GM10248 (cell line): ENCODE measurements at regions of chr13 and their contacts with region 1.

Region 1: GRCh38 chr13:46552889-46553510 is at the start of gene LRCH1:
- DNase-seq: peak; percentile 93
- CTCF ChIP-seq: no peak

Region 2: GRCh38 chr13:46530084-46530935 is 22.7 kb before region 1 on chr13:
- CTCF ChIA-PET with region 1: interaction called, 18 read pairs
- POLR2A ChIA-PET with region 1: no interaction called
- DNase-seq: no peak
- CTCF ChIP-seq: no peak

Region 3: DNA sequence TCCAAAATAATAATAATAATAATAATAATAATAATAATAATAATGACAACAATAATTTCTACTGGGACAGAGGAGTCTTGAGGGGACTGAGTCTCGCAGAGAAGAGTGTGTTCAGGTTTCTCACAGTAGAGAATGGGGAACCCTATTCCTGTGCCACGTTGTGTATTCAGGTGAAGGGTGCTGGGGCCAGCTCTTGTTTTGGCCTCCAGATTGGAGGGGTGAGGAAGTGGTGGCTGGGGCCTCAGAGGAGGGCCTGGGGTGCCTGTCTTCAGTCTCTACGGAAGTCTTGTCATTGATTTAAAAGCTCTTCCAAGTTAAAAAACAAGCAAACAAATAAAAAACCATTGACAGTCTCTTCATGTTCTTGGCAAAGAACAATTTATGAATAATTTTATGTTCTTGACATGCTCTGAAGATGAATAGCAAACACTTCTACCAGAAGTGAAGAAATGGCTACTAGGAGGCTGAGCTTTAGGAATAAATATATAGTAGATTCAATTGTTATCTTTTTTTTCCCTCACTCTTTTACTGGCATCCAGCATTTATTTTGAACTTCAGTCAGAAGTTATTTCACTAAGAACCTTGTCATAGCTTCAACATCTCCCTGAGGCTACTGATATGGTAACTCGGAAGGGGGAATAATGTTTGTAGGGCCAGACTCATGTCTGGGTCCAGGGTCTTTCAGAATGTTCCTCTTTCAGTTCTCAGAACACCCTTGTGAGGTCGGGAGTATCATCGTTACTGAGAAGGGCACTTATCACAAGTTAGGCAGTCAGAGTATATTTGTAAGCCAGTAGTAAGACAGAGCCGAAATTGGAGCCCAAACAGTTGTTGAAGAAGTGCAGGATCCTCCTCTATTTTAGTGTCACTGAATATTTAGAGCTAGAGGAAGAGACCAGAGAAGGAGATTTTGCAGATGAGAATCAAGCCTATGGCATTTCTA is 13.1 kb after region 1 on chr13:
- CTCF ChIA-PET with region 1: interaction called, 18 read pairs
- POLR2A ChIA-PET with region 1: interaction called, 3 read pairs
- DNase-seq: peak; percentile 41
- CTCF ChIP-seq: no peak

Region 4: DNA sequence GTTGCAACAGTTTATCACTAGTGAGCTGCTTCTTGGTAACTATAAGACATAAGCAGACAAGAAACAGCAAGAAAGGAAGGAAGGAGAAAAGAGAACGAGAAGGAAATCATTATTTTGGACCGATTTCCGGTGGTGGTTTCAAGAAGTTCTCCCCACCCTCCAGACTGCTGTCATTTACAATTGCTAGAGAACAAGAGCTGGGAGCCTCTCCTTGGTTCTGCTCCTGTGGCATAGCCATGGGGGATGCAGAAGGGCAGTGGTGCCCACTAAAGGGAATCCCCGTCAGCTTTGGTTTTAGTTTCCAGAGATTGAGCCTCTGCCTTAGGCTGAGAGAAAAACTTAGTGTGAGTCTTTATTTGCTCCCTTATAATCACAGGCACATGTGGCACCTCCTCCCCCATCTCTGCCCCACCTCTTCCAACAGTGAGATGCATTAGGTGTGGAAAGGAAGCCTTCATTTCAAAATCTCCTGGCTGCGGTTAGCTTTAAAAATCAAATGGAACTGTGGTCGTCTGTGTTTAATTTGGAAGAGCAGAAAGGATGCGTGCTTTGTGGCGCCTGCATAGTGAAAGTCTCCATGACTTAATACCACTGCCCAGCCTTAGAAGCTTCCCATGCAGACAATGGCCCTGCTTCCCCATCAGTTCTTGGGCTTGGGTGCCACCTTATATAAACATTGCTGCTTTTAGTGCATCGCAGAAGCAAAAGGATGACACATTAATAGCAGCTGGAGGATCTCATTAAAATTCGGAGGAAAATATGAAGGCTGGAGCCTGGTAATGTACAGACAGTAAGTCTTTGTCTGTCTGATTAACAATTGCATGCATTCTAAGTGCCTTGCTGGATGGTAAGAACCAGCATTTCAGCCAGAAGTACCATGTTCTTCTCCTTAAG is 24.9 kb after region 1 on chr13:
- CTCF ChIA-PET with region 1: interaction called, 21 read pairs
- POLR2A ChIA-PET with region 1: interaction called, 3 read pairs
- DNase-seq: no peak
- CTCF ChIP-seq: no peak

Region 5: GRCh38 chr13:46595136-46595886 is 42.3 kb after region 1 on chr13:
- CTCF ChIA-PET with region 1: interaction called, 17 read pairs
- POLR2A ChIA-PET with region 1: no interaction called
- DNase-seq: no peak
- CTCF ChIP-seq: no peak

Region 6: DNA sequence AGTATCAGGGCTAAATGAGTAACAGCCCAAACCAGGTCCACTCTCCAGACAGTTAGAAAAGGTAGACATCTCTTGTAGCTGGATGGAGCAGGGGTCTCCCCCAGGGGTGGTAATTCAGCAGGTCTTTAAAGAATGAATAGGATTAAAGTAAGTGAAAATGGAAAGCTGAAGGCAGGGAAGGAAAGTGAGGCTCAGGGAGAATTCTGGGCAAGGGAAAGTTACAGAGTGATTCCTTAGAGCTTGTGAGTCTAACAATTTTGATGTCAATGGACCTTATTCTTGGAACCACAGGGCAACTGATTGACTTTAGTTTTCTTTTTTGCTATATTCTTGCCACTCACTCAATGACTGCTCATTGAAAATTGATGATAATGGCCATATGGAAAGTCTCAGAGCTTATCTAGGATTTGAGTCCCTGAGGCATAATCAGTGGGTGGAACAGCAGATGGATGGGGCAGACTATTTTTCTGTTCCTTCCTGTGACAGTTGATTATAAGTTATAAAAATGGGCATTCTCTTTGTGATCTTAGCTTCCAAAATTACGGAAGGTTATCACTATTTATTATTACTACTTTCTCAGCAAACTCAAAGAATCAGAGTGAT is 76.9 kb after region 1 on chr13:
- CTCF ChIA-PET with region 1: no interaction called
- POLR2A ChIA-PET with region 1: no interaction called
- DNase-seq: no peak
- CTCF ChIP-seq: no peak